Heart right ventricle (tissue), 16 donors: ENCODE measurements at regions of chr15 and their contacts with region 1.

Region 1: DNA sequence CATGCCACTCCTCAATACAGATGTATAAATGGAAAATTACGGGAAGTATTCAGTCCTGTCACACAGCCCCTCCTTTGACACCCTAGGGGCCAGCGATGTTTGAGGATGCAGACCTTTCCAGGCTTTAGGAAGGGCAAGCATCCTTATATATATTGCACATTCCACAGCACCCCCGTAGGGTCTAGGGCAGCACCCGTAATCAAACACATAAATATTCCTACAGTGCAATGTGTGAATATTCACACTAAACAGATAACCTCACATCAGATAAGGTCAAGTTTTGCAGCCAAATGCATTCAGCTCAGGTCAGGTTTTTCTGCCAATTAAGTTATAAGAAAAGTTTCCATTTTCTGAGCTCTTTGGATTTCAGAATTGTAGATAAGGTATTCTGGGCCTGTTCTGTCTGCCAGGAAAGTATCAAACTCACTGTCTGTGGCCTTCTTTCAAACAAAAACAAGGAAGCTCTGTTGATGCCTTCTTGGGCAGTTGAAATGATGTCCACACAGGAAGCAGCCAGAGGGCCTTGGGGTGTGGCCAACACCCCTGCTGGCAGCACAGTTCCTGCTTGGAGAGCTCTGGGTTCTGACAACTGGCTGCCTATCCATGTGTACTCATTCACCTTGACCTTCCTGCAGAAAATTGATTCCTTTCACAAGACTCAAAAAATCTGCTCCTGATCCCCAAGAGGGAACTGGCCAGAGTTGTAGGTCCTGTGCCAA is 427.0 kb downstream of the NTRK3 start:
- DNase-seq: peak in 1 of 2 donors; percentile 46
- ATAC-seq: peak in 4 of 8 donors; percentile 37 to 79 (median 56)
- H3K4me3 ChIP-seq: no peak overlapping the region
- H3K27ac ChIP-seq: no peak overlapping the region
- H3K4me1 ChIP-seq: peaks cover 0 to 9% (median 0%) of the 10 kb centered on the region in 9 donors
- H3K27me3 ChIP-seq: no peaks in the 10 kb centered on the region
- CTCF ChIP-seq: no peak

Region 2: DNA sequence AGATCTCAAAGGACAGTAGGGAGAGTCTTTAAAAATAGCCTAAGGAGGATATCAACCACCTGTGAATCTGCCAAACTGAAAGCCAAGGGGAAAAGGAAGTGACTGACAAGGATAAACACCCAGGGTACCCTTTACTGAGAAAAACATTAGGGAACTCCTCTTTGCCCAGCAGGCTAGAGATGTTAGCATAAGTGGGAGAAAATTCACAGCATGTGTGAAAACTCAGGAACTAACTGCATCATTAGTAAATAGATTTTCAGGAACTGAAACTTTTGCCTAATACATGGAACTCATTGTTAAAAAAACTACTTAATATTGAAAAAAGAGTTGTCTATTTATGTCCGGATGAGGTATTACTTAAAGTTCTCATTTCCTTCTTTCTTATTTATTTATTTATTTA is 51.5 kb after region 1 on chr15:
- intact Hi-C with region 1: loop called in 1 of 10 experiments (anchors 10 kb)
- DNase-seq: no peak
- ATAC-seq: peak in 3 of 8 donors; percentile 11 to 41 (median 28)
- H3K4me3 ChIP-seq: no peak overlapping the region
- H3K27ac ChIP-seq: no peak overlapping the region
- H3K4me1 ChIP-seq: peaks cover 0 to 12% (median 4%) of the 10 kb centered on the region in 9 donors
- H3K27me3 ChIP-seq: no peaks in the 10 kb centered on the region
- CTCF ChIP-seq: no peak